ENCODE measurements at regions of chr2 and their contacts with region 1.

Region 1: DNA sequence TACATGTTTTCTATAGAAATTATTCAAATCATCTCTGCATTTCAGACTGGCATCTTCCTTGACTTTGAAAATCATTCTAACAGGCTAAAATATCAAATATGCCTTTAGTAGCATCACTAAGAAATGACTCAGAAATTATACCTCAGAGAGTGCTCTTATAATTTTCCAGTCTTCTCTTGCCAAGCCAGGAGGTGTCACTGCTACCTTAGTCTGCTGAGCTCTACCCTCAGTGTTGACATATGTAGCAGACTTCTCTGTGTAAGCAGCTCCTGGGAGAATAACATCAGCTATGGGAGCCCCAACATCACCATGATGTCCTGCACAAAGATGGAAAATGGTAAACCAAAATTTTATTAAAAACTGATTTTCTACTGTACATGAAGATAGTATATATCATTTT is 31.6 kb downstream of the NDUFS1 start:
- DNase-seq: no peak
- ATAC-seq: no peak
- H3K4me3 ChIP-seq: no peak overlapping the region
- H3K27ac ChIP-seq: no peak overlapping the region
- H3K4me1 ChIP-seq: no peaks in the 10 kb centered on the region
- H3K27me3 ChIP-seq: no peaks in the 10 kb centered on the region
- CTCF ChIP-seq: no peak
- POLR2A ChIP-seq: no peak

Region 2: DNA sequence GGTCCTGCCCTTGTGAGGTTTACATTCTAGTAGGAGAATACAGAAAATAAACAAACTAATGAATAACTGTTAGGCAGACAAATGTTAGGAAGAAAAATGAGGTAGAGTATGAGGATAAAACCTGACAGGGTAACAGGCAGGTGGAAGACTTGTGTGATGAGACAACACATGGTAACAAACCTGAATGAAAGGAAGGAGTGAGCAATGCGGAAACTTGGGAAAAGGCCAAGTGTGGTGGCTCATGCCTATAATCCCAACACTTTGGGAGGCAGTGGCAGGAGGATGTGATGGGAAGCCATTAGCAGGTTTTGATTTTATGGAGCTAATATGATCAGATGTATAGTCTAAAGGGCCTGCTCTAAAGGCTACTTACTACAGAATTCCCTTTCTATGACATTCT is 115.9 kb before region 1 on chr2:
- intact Hi-C with region 1: loop called in 1 of 10 experiments (anchors 10 kb)
- DNase-seq: no peak
- ATAC-seq: peak in 1 of 4 donors; percentile 22
- H3K4me3 ChIP-seq: no peak overlapping the region
- H3K27ac ChIP-seq: no peak overlapping the region
- H3K4me1 ChIP-seq: peaks cover 0 to 9% (median 0%) of the 10 kb centered on the region in 12 donors
- H3K27me3 ChIP-seq: no peaks in the 10 kb centered on the region
- CTCF ChIP-seq: no peak
- POLR2A ChIP-seq: no peak

Region 3: GRCh38 chr2:206023183-206023582 is 104.5 kb before region 1 on chr2:
- intact Hi-C with region 1: loop called in 2 of 10 experiments (anchors 10 kb)
- DNase-seq: no peak
- ATAC-seq: no peak
- H3K4me3 ChIP-seq: no peak overlapping the region
- H3K27ac ChIP-seq: no peak overlapping the region
- H3K4me1 ChIP-seq: no peaks in the 10 kb centered on the region
- H3K27me3 ChIP-seq: no peaks in the 10 kb centered on the region
- CTCF ChIP-seq: peak in 4 of 12 donors; percentile 8 to 33 (median 24)
- POLR2A ChIP-seq: no peak